ENCODE measurements at regions of chr15 and their contacts with region 1.

Region 1: DNA sequence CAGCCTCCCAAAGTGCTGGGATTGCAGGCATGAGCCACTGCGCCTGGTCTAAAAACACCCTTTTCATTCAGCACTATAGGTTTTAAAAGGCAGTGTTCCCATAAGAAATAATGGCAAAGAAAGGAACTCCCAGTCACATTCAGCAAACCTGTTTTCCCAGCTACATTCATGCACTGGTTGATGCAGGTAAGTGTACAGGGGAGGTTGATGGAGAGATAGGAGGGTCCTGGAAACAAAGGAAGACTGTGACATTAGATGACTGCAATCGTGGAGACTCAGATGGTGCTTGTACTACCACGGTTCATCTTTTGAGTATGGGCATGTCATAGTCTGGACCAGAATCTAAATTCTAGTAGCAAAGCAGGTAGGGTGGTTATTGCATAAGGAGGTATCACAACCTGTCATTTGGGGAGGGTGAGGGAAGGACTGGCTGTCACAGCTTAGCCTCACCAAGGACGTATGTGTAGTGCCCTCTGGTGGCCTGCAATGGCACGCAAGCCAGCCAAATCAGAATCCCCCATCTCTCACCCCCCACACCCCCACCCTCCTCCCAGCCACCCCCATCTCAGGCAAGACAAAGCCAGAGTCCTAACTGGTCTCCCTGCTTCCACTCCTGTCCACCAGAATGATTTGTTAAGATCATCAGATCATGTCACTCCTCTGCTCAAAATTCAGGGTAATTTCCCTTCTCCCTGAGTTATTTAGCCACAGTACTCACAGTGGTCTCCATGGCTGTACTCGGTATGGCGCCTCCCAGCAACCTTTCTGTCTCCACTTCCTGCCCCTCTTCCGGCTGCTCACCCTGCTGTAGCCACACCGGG is 28.8 kb upstream of the UBL7 start:
- DNase-seq: peak; percentile 79 to 85 (median 82)
- ATAC-seq: peak; percentile 98
- H3K4me3 ChIP-seq: no peak overlapping the region
- H3K27ac ChIP-seq: peak overlapping the region; percentile 20; the same call in 1 of the 3 replicates
- H3K4me1 ChIP-seq: peaks cover 3 to 4% of the 10 kb centered on the region in 2 experiments; a peak in 3 of 5 replicates
- H3K27me3 ChIP-seq: no peaks in the 10 kb centered on the region
- CTCF ChIP-seq: peak; percentile 64 to 73 (median 68)
- EP300 ChIP-seq: no peak
- POLR2A ChIP-seq: no peak
- RAD21 ChIP-seq: peak; percentile 48 to 66

Region 2: GRCh38 chr15:74407055-74407691 is 82.6 kb before region 1 on chr15:
- CTCF ChIA-PET with region 1: no interaction called
- POLR2A ChIA-PET with region 1: no interaction called
- in situ Hi-C with region 1: no loop called
- intact Hi-C with region 1: no loop called
- DNase-seq: peak in 1 of 4 experiments; percentile 54
- ATAC-seq: peak; percentile 68
- H3K4me3 ChIP-seq: no peak overlapping the region
- H3K27ac ChIP-seq: no peak overlapping the region
- H3K4me1 ChIP-seq: peaks cover 44 to 59% of the 10 kb centered on the region in 2 experiments
- H3K27me3 ChIP-seq: no peaks in the 10 kb centered on the region
- CTCF ChIP-seq: no peak
- EP300 ChIP-seq: no peak
- POLR2A ChIP-seq: no peak
- RAD21 ChIP-seq: no peak

Region 3: GRCh38 chr15:74438721-74439316 is 50.9 kb before region 1 on chr15:
- CTCF ChIA-PET with region 1: interaction called, 4 read pairs
- POLR2A ChIA-PET with region 1: no interaction called
- in situ Hi-C with region 1: no loop called
- intact Hi-C with region 1: loop called (anchors 5 kb)
- DNase-seq: peak; percentile 75 to 87 (median 78)
- ATAC-seq: peak; percentile 82
- H3K4me3 ChIP-seq: no peak overlapping the region
- H3K27ac ChIP-seq: no peak overlapping the region
- H3K4me1 ChIP-seq: peaks cover 25 to 36% of the 10 kb centered on the region in 2 experiments
- H3K27me3 ChIP-seq: no peaks in the 10 kb centered on the region
- CTCF ChIP-seq: peak; percentile 95 to 97 (median 96)
- EP300 ChIP-seq: 0 out of 2 replicates have a peak, but pooled peaks have one; percentile 7
- POLR2A ChIP-seq: no peak
- RAD21 ChIP-seq: peak; percentile 99 to 100

Measured in K562 (cell line).